Aorta (tissue), 5 donors: ENCODE measurements at regions of chr1 and their contacts with region 1.

Region 1: DNA sequence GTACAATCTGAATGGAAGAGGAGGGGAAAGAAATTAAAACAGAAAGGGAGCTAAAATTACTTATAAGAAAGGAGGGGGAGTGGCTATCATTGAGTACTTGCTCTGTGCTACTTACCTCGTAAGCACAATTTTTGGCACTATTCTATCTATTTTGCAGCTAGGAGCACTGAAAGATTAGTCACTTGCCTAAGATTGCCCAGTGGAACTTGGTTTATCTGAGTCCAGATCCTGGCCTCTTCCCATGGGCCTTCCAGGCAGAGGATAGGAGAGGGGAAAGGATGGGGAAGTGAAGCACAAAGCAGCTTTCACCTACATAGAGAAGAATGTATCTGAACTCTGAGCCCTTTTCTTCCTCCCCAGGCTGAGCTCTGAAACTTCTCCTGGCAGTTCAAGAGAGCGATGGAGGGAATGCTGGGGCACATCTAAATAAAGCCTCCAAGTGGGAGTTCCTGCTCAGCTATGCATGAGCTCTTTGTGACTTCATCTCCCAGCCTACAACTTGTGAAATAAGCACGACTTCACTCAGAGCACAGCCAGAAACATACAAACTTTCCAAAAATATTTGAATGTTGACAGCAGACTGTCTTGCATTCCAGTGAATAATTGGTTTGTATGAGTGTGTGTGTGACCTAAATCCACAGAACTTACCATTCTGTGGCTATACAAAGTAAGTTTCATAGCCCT is 29.4 kb downstream of the HMGB4 start:
- DNase-seq: no peak
- ATAC-seq: peak; percentile 92
- H3K4me3 ChIP-seq: no peak overlapping the region
- H3K27ac ChIP-seq: peak overlapping the region; percentile 97 to 98
- H3K4me1 ChIP-seq: peaks cover 0 to 5% of the 10 kb centered on the region in 2 donors
- H3K27me3 ChIP-seq: no peaks in the 10 kb centered on the region

Region 2: GRCh38 chr1:33972676-33973395 is 79.5 kb after region 1 on chr1:
- intact Hi-C with region 1: loop called in 1 of 2 experiments (anchors 5 kb)
- DNase-seq: no peak
- ATAC-seq: no peak
- H3K4me3 ChIP-seq: no peak overlapping the region
- H3K27ac ChIP-seq: no peak overlapping the region
- H3K4me1 ChIP-seq: no peaks in the 10 kb centered on the region
- H3K27me3 ChIP-seq: no peaks in the 10 kb centered on the region

Region 3: DNA sequence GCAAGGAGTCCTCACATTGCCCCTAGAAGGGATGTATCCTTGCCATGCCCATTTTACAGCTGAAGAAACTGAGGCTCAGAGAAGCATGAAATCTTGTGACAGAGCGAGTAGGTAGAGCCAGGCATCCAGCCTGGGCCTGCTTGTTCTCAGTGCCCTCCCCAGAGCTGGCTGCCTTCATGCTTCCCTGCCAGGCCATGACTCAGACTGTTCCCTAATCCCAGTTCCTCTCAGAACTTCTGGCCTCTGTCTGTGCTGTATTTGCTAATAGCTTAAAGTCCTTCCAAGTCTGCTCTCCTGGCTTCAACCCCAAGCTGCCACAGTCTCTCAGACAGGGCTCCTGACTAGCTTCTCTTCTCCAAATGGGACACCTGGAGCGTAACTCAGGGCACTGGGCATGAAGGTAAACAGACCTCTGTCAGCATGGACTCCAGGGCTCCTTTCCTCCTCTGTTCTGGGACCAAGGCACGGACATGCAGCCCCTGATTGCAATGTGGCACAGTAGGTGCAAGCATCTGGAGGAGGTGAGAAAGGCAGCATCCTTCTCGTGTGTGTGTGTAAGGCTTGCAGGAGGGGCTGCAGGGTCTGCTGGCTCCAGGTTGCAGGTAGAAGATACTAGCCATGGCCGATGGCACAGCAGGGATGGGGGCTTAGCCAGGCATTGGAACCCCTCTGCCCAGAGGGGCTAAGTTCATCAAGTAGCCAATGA is 93.3 kb after region 1 on chr1:
- intact Hi-C with region 1: loop called (anchors 5 kb)
- DNase-seq: peak; percentile 89
- ATAC-seq: peak; percentile 93
- H3K4me3 ChIP-seq: no peak overlapping the region
- H3K27ac ChIP-seq: peak overlapping the region in 1 of 2 donors; percentile 97
- H3K4me1 ChIP-seq: peaks cover 0 to 3% of the 10 kb centered on the region in 2 donors
- H3K27me3 ChIP-seq: no peaks in the 10 kb centered on the region